ENCODE measurements at regions of chr12 and their contacts with region 1.

Region 1: DNA sequence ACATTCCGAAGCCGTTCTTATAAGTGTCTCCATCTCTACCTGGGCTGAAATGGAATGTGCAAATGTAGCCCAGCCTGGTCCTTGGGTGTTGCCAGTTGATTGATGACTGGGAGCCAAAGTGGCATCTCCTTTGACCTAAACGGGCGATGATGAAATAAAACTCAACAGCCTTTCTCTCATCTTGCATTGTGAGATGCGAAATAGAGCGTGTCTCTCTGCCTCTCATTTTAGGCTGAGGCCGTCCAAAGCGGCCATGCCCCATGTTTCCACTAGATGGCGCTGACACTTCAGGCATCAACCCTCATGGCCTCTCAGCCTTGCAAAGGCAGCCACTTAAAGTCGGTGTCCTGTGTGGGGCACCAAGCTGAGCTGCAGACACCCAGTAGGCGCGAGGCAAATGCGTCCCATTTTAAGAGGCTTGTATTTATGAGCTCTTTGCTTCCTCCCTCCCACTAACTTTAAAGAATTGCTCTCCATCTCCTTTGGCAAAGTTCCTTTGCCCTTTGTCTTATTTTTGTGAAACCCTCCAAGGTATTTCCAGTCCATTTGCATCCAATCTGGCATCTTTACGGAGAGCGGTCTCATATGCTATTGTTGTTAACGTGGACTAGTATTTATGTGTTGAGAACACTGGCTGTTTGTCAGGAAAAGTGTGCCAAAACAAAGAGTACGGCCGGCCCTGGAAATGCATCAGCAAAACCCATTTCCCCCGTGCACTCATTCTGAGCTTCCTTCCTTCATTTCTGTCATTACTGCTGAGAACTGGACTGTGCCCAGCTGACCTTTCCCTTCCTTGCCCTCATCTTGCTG is 25.0 kb downstream of the GPRC5A start:
- DNase-seq: peak; percentile 83
- H3K4me3 Mint-ChIP-seq: no peak overlapping the region
- H3K27ac Mint-ChIP-seq: no peak overlapping the region
- H3K4me1 Mint-ChIP-seq: no peaks in the 10 kb centered on the region
- H3K27me3 Mint-ChIP-seq: no peaks in the 10 kb centered on the region
- CTCF ChIP-seq: peak; percentile 92

Region 2: GRCh38 chr12:12899530-12900380 is 16.6 kb before region 1 on chr12:
- CTCF ChIA-PET with region 1: interaction called, 26 read pairs
- POLR2A ChIA-PET with region 1: no interaction called
- intact Hi-C with region 1: no loop called
- DNase-seq: peak; percentile 93
- H3K4me3 Mint-ChIP-seq: peak overlapping the region; percentile 68
- H3K27ac Mint-ChIP-seq: peak overlapping the region; percentile 86
- H3K4me1 Mint-ChIP-seq: peaks cover 50% of the 10 kb centered on the region
- H3K27me3 Mint-ChIP-seq: no peaks in the 10 kb centered on the region
- CTCF ChIP-seq: no peak

Region 3: DNA sequence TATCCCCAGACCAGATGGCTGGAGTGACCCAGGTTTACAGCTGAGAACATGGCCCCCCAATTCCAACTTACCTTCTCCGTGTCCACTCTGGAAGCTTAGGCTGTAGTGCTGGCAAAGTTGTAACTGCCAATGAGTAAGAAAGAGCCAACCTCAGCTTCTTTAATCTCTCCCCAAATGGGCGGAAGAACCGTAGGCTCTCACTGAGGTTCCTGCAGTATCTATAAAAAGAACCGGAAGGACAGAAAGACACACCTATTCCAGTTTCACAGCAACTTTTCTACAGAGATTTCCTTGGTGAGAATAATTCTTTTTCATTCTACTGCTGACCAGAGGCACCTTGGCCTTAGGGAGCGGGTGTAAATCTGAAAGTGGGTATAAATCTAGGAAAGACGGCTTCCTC is 35.7 kb after region 1 on chr12 and contains the start of gene GPRC5D:
- CTCF ChIA-PET with region 1: interaction called, 10 read pairs
- POLR2A ChIA-PET with region 1: no interaction called
- intact Hi-C with region 1: no loop called
- DNase-seq: no peak
- H3K4me3 Mint-ChIP-seq: no peak within 1 kb of the TSS
- H3K27ac Mint-ChIP-seq: no peak within 1 kb of the TSS
- H3K4me1 Mint-ChIP-seq: no peaks in the 10 kb centered on the region
- H3K27me3 Mint-ChIP-seq: no peaks in the 10 kb centered on the region
- CTCF ChIP-seq: no peak
- total RNA-seq, gene GPRC5D: not detected in 2 replicates

Region 4: GRCh38 chr12:12983420-12984035 is 67.2 kb after region 1 on chr12:
- CTCF ChIA-PET with region 1: interaction called, 150 read pairs
- POLR2A ChIA-PET with region 1: interaction called, 7 read pairs
- intact Hi-C with region 1: loop called (anchors 1 kb)
- DNase-seq: peak; percentile 65
- H3K4me3 Mint-ChIP-seq: no peak overlapping the region
- H3K27ac Mint-ChIP-seq: peak overlapping the region; percentile 0
- H3K4me1 Mint-ChIP-seq: peaks cover 6% of the 10 kb centered on the region
- H3K27me3 Mint-ChIP-seq: no peaks in the 10 kb centered on the region
- CTCF ChIP-seq: peak; percentile 66

Region 5: GRCh38 chr12:13233830-13234641 is 317.7 kb after region 1 on chr12:
- CTCF ChIA-PET with region 1: interaction called, 17 read pairs
- POLR2A ChIA-PET with region 1: no interaction called
- intact Hi-C with region 1: loop called (anchors 1 kb)
- DNase-seq: peak; percentile 77
- H3K4me3 Mint-ChIP-seq: no peak overlapping the region
- H3K27ac Mint-ChIP-seq: no peak overlapping the region
- H3K4me1 Mint-ChIP-seq: peaks cover 12% of the 10 kb centered on the region
- H3K27me3 Mint-ChIP-seq: no peaks in the 10 kb centered on the region
- CTCF ChIP-seq: peak; percentile 88